Aorta (tissue), 5 donors: ENCODE measurements at regions of chr13 and their contacts with region 1.

Region 1: GRCh38 chr13:42807866-42808265 is 26.5 kb downstream of the FAM216B start:
- DNase-seq: no peak
- ATAC-seq: no peak
- H3K4me3 ChIP-seq: no peak overlapping the region
- H3K27ac ChIP-seq: no peak overlapping the region
- H3K4me1 ChIP-seq: no peaks in the 10 kb centered on the region
- H3K27me3 ChIP-seq: no peaks in the 10 kb centered on the region

Region 2: GRCh38 chr13:42656161-42656560 is 151.7 kb before region 1 on chr13:
- intact Hi-C with region 1: loop called in 1 of 2 experiments (anchors 5 kb)
- DNase-seq: no peak
- ATAC-seq: no peak
- H3K4me3 ChIP-seq: no peak overlapping the region
- H3K27ac ChIP-seq: no peak overlapping the region
- H3K4me1 ChIP-seq: no peaks in the 10 kb centered on the region
- H3K27me3 ChIP-seq: no peaks in the 10 kb centered on the region

Region 3: DNA sequence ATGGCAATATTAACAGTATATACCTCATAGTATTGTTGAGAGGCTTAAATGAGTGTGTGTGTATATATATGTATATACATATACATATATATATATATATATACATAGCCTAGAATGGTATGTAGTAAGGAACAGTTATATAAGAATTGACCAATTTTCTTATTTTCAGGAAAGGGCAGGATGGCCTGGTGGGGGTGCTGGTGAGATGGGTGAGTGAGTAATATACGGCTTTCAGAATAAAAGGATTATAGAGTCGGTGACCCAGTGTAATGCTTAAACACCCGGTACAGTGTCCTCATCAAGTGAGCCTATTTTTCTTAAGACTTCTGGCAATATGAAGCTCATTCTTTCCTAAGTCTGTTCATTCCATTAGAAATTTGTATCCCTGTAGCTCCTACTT is 38.2 kb before region 1 on chr13:
- intact Hi-C with region 1: no loop called
- DNase-seq: no peak
- ATAC-seq: no peak
- H3K4me3 ChIP-seq: no peak overlapping the region
- H3K27ac ChIP-seq: no peak overlapping the region
- H3K4me1 ChIP-seq: no peaks in the 10 kb centered on the region
- H3K27me3 ChIP-seq: no peaks in the 10 kb centered on the region

Region 4: DNA sequence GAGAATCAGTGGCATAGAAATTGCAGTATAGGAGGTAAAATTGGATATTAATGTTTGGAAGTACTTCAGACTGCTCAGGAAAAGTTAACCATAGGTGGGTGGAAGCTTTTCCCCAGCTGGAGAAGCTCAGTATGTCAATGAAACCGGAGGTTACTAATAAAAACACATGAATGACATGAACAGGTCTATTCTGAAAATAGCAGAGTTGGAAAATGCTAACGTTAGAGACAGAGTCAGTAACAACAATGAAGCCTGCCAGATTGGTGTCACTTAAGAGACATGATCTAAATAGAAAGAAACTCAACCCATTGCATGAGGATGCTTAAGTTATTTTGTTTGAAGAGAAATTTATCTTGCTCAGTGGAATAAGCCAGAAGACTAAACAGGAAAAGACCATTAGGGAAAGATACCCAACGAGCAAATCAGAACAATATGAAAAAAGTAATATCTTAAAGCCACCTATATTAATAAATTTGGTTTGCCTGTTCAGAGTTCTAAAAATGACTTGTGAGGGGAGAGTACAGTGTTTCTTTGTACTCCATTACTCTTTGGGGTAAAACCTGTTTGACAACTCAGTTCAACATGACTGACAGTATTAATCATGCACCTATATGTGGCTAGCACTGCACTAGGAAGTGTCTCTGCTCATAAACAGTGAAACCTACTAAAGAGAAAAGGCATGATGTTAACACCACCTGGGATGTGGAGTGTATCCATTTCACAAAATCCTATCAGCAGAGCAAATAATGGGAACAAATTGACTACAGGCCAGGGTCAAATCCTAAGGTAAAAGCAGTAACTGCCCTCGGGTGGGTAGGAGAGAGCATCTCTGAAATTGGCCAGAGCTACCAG is 580.2 kb after region 1 on chr13:
- intact Hi-C with region 1: no loop called
- DNase-seq: no peak
- ATAC-seq: no peak
- H3K4me3 ChIP-seq: no peak overlapping the region
- H3K27ac ChIP-seq: no peak overlapping the region
- H3K4me1 ChIP-seq: peaks cover 0 to 2% of the 10 kb centered on the region in 2 donors
- H3K27me3 ChIP-seq: no peaks in the 10 kb centered on the region